Activated CD4-positive, alpha-beta memory T cell treated with anti-CD3 and anti-CD28 coated beads for 36 hours (primary cell): ENCODE measurements at regions of chr2 and their contacts with region 1.

Region 1: GRCh38 chr2:230068016-230068650 is 591 bp downstream of the SLC16A14 start:
- DNase-seq: peak; percentile 62
- H3K4me3 Mint-ChIP-seq: peak overlapping the region; percentile 81
- H3K27ac Mint-ChIP-seq: no peak overlapping the region
- H3K4me1 Mint-ChIP-seq: peaks cover 18% of the 10 kb centered on the region
- H3K27me3 Mint-ChIP-seq: peaks cover 15% of the 10 kb centered on the region

Region 2: GRCh38 chr2:229780856-229781773 is 287.0 kb before region 1 on chr2:
- CTCF ChIA-PET with region 1: interaction called, 9 read pairs
- POLR2A ChIA-PET with region 1: no interaction called
- intact Hi-C with region 1: loop called (anchors 5 kb)
- DNase-seq: no peak
- H3K4me3 Mint-ChIP-seq: no peak overlapping the region
- H3K27ac Mint-ChIP-seq: peak overlapping the region; percentile 26
- H3K4me1 Mint-ChIP-seq: peaks cover 22% of the 10 kb centered on the region
- H3K27me3 Mint-ChIP-seq: no peaks in the 10 kb centered on the region

Region 3: GRCh38 chr2:229955663-229956062 is 112.5 kb before region 1 on chr2:
- CTCF ChIA-PET with region 1: no interaction called
- POLR2A ChIA-PET with region 1: no interaction called
- intact Hi-C with region 1: no loop called
- DNase-seq: no peak
- H3K4me3 Mint-ChIP-seq: no peak overlapping the region
- H3K27ac Mint-ChIP-seq: no peak overlapping the region
- H3K4me1 Mint-ChIP-seq: no peaks in the 10 kb centered on the region
- H3K27me3 Mint-ChIP-seq: no peaks in the 10 kb centered on the region

Region 4: GRCh38 chr2:230000118-230000841 is 67.9 kb before region 1 on chr2:
- CTCF ChIA-PET with region 1: no interaction called
- POLR2A ChIA-PET with region 1: no interaction called
- intact Hi-C with region 1: loop called (anchors 2 kb)
- DNase-seq: peak; percentile 43
- H3K4me3 Mint-ChIP-seq: no peak overlapping the region
- H3K27ac Mint-ChIP-seq: no peak overlapping the region
- H3K4me1 Mint-ChIP-seq: peaks cover 7% of the 10 kb centered on the region
- H3K27me3 Mint-ChIP-seq: no peaks in the 10 kb centered on the region

Region 5: DNA sequence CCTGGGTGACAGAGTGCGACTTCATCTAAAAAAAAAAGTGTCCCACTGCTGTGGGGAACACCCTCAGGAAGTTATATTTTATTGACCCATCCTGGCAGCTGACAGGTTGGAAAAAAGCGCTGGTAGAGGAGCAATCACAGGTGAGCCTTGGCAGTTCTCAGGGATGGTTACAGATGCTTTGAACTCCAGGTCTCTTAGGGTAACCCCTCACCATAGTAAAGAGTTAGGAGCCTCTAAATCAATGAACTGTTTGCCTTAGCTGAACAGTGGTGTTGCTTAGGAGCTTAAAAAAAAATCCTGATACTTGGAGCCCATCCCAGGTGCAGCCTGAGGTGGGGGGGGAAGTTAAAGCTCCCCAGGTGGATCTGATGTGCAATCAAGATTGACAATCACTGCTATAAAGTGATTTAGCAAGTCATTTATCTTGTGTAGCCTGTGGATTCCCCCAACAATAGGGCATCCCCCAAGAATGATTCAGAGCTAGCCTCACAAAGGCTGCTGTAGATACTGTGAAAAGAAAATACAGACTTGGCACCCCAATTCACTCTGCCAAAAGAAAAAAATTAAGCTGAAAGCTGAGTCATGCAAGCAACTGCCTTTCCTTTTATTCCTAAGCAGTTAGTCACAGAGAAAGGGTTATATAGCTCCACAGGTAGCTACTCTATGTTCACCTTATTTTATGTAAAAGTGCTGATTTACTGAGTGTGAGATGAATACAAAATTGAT is 14.2 kb before region 1 on chr2:
- CTCF ChIA-PET with region 1: interaction called, 15 read pairs
- POLR2A ChIA-PET with region 1: no interaction called
- intact Hi-C with region 1: loop called (anchors 2 kb)
- DNase-seq: peak; percentile 19
- H3K4me3 Mint-ChIP-seq: no peak overlapping the region
- H3K27ac Mint-ChIP-seq: no peak overlapping the region
- H3K4me1 Mint-ChIP-seq: peaks cover 9% of the 10 kb centered on the region
- H3K27me3 Mint-ChIP-seq: no peaks in the 10 kb centered on the region

Region 6: GRCh38 chr2:230097841-230098240 is 29.7 kb after region 1 on chr2:
- CTCF ChIA-PET with region 1: no interaction called
- POLR2A ChIA-PET with region 1: no interaction called
- intact Hi-C with region 1: no loop called
- DNase-seq: no peak
- H3K4me3 Mint-ChIP-seq: no peak overlapping the region
- H3K27ac Mint-ChIP-seq: no peak overlapping the region
- H3K4me1 Mint-ChIP-seq: no peaks in the 10 kb centered on the region
- H3K27me3 Mint-ChIP-seq: peaks cover 8% of the 10 kb centered on the region

Region 7: GRCh38 chr2:230160112-230160660 is 92.1 kb after region 1 on chr2:
- CTCF ChIA-PET with region 1: interaction called, 57 read pairs
- POLR2A ChIA-PET with region 1: no interaction called
- intact Hi-C with region 1: loop called (anchors 1 kb)
- DNase-seq: peak; percentile 69
- H3K4me3 Mint-ChIP-seq: no peak overlapping the region
- H3K27ac Mint-ChIP-seq: no peak overlapping the region
- H3K4me1 Mint-ChIP-seq: peaks cover 7% of the 10 kb centered on the region
- H3K27me3 Mint-ChIP-seq: no peaks in the 10 kb centered on the region